Transverse colon (tissue), 4 donors: ENCODE measurements at regions of chr6 and their contacts with region 1.

Region 1: DNA sequence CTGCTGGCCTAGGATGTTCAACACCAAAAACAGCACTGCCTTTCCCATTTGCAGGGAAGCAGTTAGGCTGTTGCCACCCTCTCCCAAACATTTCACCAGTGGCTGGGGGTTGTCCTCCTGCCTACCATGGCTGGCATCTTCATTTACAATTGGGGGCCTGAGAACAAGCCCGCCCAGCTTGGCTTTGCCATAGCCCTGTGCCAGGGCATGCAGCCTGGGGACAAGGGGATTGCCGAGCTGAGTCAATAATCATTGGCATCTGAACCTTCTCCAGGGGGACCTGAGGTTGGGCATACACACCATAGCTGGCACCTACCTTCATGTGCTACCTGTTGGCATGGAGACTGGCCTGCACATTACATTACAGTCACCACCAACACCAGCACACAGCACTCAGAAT is 345.1 kb downstream of the KHDRBS2 start:
- DNase-seq: no peak
- H3K4me3 ChIP-seq: no peak overlapping the region
- H3K27ac ChIP-seq: no peak overlapping the region
- H3K4me1 ChIP-seq: no peaks in the 10 kb centered on the region
- H3K27me3 ChIP-seq: no peaks in the 10 kb centered on the region
- CTCF ChIP-seq: no peak
- EP300 ChIP-seq: no peak
- POLR2A ChIP-seq: no peak

Region 2: GRCh38 chr6:61688165-61688564 is 252.8 kb before region 1 on chr6:
- in situ Hi-C with region 1: no loop called
- intact Hi-C with region 1: no loop called
- DNase-seq: no peak
- H3K4me3 ChIP-seq: no peak overlapping the region
- H3K27ac ChIP-seq: no peak overlapping the region
- H3K4me1 ChIP-seq: no peaks in the 10 kb centered on the region
- H3K27me3 ChIP-seq: no peaks in the 10 kb centered on the region
- CTCF ChIP-seq: no peak
- EP300 ChIP-seq: no peak
- POLR2A ChIP-seq: no peak

Region 3: DNA sequence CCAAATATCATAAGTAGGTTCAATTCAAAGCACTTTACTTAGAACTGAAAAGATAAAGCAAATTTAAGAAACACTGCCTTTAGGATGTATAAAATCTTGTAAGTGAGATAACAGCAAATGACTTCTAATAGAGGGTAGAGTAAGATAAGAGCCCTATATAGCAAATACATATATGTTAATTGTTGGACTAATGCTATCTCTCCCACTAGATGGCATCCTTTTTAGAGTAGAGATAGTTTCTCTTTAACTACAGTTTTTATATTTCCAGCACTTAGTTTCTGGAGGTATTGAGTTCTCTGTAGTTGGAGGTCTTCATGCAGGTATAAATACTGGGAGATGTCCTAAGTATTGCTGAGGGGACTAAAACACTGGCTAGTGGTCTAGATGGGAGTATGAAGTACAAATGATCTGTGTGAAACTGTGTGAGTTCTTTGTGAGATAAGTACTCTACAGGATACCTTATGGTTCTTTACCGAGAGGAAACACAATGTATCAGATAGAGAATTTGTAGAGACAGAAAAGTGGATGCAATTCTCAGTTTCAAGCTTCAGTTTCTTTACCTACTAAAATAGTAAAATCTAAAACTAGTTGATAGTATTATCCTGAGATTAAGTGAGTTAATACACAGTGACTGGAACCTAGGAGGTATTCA is 54.2 kb before region 1 on chr6:
- in situ Hi-C with region 1: no loop called
- intact Hi-C with region 1: loop called (anchors 2 kb)
- DNase-seq: no peak
- H3K4me3 ChIP-seq: no peak overlapping the region
- H3K27ac ChIP-seq: no peak overlapping the region
- H3K4me1 ChIP-seq: no peaks in the 10 kb centered on the region
- H3K27me3 ChIP-seq: no peaks in the 10 kb centered on the region
- CTCF ChIP-seq: no peak
- EP300 ChIP-seq: no peak
- POLR2A ChIP-seq: no peak